H1 (cell line): ENCODE measurements at regions of chr21 and their contacts with region 1.

Region 1: GRCh38 chr21:20999659-21000058 is 1.4 kb downstream of the NCAM2 start:
- DNase-seq: peak in 1 of 2 experiments; percentile 70
- H3K4me3 ChIP-seq: no peak overlapping the region
- H3K27ac ChIP-seq: no peak overlapping the region
- H3K4me1 ChIP-seq: peaks cover 0 to 14% (median 6%) of the 10 kb centered on the region in 4 experiments; a peak in 6 of 7 replicates
- H3K27me3 ChIP-seq: peaks cover 7 to 24% (median 17%) of the 10 kb centered on the region in 4 experiments
- CTCF ChIP-seq: peak in 2 of 3 experiments; percentile 74 to 88; a peak in 3 of 4 replicates
- EP300 ChIP-seq: no peak
- POLR2A ChIP-seq: no peak
- RAD21 ChIP-seq: peak; percentile 94 to 97

Region 2: GRCh38 chr21:21018821-21019220 is 19.2 kb after region 1 on chr21:
- CTCF ChIA-PET with region 1: interaction called, 22 read pairs
- POLR2A ChIA-PET with region 1: no interaction called
- DNase-seq: no peak
- H3K4me3 ChIP-seq: no peak overlapping the region
- H3K27ac ChIP-seq: no peak overlapping the region
- H3K4me1 ChIP-seq: no peaks in the 10 kb centered on the region; a peak in 1 of 7 replicates
- H3K27me3 ChIP-seq: no peaks in the 10 kb centered on the region
- CTCF ChIP-seq: no peak
- EP300 ChIP-seq: no peak
- POLR2A ChIP-seq: no peak
- RAD21 ChIP-seq: no peak

Region 3: DNA sequence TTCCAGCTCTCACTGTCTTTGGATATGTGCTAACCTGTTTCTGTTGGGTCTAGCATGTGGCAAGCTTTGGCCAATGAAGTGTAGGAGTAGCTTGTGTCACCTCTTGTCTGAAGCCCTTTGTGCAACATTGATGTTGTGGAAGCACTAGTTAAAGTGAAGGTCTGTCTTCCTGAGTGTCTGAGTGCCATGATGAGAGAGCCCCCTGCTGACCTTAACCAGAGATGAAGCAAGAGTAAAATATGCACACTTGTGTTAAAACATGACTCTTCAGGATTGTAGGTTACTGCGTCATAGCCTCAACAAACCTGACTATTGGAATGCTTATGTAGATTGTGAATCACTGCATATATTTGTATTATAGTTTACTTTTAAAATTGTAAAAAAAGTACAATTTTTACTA is 102.3 kb after region 1 on chr21:
- CTCF ChIA-PET with region 1: interaction called, 116 read pairs
- POLR2A ChIA-PET with region 1: interaction called, 3 read pairs
- DNase-seq: no peak
- H3K4me3 ChIP-seq: no peak overlapping the region
- H3K27ac ChIP-seq: no peak overlapping the region
- H3K4me1 ChIP-seq: peaks cover 0 to 4% (median 0%) of the 10 kb centered on the region in 4 experiments; a peak in 1 of 7 replicates
- H3K27me3 ChIP-seq: no peaks in the 10 kb centered on the region
- CTCF ChIP-seq: peak in 2 of 3 experiments; percentile 60 to 79; a peak in 3 of 4 replicates
- EP300 ChIP-seq: no peak
- POLR2A ChIP-seq: no peak
- RAD21 ChIP-seq: peak; percentile 75 to 88